Common myeloid progenitor, CD34-positive (primary cell): ENCODE measurements at regions of chr4 and their contacts with region 1.

Region 1: DNA sequence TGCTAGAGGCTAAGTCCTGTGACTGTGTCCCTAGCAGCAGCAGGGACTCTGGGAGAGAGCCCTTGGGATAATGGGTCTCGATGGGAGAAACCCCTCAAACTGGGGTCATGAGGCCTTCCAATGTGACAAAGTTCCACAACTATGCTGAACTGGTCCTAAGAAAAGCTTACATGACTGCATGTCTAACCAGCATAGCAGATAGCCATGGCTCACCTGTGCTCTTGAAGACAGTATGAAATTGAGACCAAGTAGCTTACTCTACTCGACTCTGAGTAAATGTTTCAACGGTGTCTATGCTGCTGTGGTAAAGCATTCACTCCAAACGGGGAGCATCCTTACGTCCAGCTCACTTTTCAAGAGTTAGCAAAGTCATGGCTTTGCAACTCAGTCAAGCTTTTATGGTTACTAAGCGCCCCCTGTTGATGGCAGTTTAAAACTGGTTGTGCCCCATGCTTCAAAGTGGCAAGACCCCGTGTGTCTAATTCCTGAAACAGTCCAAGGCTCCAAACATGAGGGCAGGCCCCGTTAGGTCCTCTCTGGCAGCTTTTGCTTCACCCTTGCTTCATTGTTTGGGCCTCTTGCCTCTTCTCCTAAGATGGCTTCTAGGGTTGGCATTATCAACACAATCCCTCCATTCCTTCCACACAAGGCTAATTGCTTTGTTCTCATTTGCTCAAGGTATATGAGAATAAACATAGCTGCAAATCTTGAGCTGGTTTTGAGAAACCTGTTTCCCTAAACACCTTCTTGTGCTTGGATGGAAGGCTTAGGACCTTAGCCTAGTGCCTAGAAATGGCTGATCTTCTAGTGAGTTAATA is 46.6 kb downstream of the CCNG2 start:
- DNase-seq: peak; percentile 81 to 92 (median 89)
- H3K4me3 ChIP-seq: no peak overlapping the region
- H3K27ac ChIP-seq: no peak overlapping the region
- H3K4me1 ChIP-seq: peaks cover 0 to 2% (median 0%) of the 10 kb centered on the region in 4 experiments
- H3K27me3 ChIP-seq: no peaks in the 10 kb centered on the region

Region 2: GRCh38 chr4:76811604-76812412 is 391.8 kb before region 1 on chr4:
- CTCF ChIA-PET with region 1: no interaction called
- POLR2A ChIA-PET with region 1: no interaction called
- DNase-seq: no peak
- H3K4me3 ChIP-seq: no peak overlapping the region
- H3K27ac ChIP-seq: no peak overlapping the region
- H3K4me1 ChIP-seq: peaks cover 0 to 5% (median 0%) of the 10 kb centered on the region in 4 experiments
- H3K27me3 ChIP-seq: no peaks in the 10 kb centered on the region

Region 3: DNA sequence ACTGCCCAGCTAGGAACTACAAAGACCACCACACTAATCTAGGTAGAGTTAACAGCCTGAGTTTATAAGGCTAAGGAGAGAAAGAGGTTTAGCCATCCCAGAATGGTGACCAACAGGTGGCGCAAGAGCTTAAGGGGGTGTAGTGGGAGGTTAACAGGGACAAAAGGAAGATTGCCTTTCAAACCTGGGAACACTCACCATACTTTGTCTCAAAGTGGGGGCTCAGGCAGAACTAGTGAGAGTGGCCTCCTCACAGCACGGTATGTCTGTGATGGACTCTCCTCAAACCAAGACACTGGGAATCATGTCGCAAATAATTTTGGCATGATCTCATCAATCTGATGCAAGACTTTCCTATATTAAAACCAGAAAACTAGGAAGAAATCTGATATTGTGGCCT is 151.2 kb before region 1 on chr4:
- CTCF ChIA-PET with region 1: interaction called, 364 read pairs
- POLR2A ChIA-PET with region 1: no interaction called
- DNase-seq: peak; percentile 70 to 80 (median 73)
- H3K4me3 ChIP-seq: no peak overlapping the region
- H3K27ac ChIP-seq: no peak overlapping the region
- H3K4me1 ChIP-seq: peaks cover 0 to 3% (median 0%) of the 10 kb centered on the region in 4 experiments
- H3K27me3 ChIP-seq: no peaks in the 10 kb centered on the region

Region 4: DNA sequence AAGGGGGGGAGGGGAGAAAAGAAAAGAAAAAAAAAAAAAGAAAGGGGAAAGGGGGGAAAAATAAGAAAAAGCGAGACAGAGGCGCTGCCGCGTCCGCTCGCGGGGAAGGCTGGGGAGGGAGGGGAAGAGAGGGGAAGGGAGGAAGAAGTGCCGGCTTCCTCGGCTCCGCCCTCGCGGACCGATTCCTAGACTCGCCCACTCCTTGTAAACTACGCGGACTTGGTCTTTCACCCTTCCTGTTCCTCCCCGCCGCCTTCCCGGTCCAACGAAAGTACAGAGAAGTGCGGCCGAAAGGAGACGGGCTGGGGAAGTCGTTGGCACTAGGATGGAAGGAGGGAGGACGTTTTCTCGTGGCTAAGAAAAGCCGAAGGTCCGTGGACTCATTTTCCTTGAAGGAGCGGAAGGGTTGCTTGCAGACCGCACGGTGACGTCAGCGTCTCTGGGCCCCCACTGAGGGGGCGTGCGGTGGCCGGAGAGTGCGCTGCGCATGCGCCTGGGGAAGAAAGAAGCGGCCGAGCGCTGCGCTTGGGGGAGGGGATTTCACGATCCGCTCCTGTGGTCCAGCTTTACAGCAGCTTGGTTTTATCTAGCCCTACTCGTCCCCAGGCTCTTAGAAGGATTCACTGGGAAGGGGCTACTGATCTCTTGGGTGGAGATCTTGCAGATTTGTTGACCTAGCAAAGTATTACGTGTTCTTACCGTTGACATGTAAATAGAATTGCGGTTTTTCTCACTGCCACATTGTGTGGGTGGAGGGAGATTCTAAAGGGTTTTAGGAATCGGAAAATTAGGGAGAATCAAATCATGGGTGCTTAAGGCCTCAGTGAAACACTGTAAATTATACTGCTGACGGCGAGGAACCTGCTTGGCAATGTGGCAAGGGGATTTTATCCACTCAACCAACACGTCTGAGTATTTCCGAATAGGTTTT is 127.5 kb before region 1 on chr4 and contains the start of gene CCNI:
- CTCF ChIA-PET with region 1: interaction called, 12 read pairs
- POLR2A ChIA-PET with region 1: no interaction called
- DNase-seq: peak; percentile 98
- H3K4me3 ChIP-seq: peak within 1 kb of the TSS; percentile 79 to 99 (median 93)
- H3K27ac ChIP-seq: peak within 1 kb of the TSS; percentile 100
- H3K4me1 ChIP-seq: peaks cover 21 to 55% (median 46%) of the 10 kb centered on the region in 4 experiments
- H3K27me3 ChIP-seq: no peaks in the 10 kb centered on the region

Region 5: DNA sequence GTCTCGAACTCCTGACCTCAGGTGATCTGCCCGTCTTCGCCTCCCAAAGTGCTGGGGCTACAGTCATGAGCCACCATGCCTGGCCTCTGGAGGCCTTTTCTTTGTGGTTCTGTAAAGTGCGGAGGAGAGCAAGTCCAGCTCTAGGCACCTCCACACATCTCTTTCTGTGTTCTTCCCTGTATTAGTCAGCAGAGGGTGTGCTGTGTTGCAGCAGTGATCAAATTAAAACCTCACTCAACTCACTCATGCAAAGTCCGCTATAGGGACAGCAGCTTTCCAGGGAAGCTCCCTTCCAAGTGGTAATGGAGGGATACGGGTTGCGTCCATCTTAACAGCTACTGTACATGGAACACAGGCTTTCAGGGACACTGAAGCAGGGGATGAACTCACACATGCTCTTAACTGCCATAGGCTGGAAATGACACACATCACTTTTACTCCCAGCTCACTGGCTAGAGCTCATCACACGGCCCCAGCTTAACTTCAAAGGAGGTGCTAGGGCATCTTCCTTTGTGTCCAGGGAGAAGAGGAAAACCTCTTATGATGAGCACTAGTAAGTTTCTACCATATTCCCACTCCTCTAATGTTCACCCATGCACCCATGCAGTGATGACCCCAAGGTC is 82.6 kb before region 1 on chr4:
- CTCF ChIA-PET with region 1: interaction called, 31 read pairs
- POLR2A ChIA-PET with region 1: no interaction called
- DNase-seq: peak in 2 of 3 donors; percentile 27 to 33
- H3K4me3 ChIP-seq: no peak overlapping the region
- H3K27ac ChIP-seq: no peak overlapping the region
- H3K4me1 ChIP-seq: peaks cover 0 to 4% (median 2%) of the 10 kb centered on the region in 4 experiments
- H3K27me3 ChIP-seq: no peaks in the 10 kb centered on the region

Region 6: GRCh38 chr4:77132652-77133312 is 70.8 kb before region 1 on chr4:
- CTCF ChIA-PET with region 1: interaction called, 31 read pairs
- POLR2A ChIA-PET with region 1: no interaction called
- DNase-seq: peak in 1 of 3 donors; percentile 19
- H3K4me3 ChIP-seq: no peak overlapping the region
- H3K27ac ChIP-seq: no peak overlapping the region
- H3K4me1 ChIP-seq: peaks cover 0 to 13% (median 9%) of the 10 kb centered on the region in 4 experiments
- H3K27me3 ChIP-seq: no peaks in the 10 kb centered on the region

Region 7: GRCh38 chr4:77178560-77178959 is 25.0 kb before region 1 on chr4:
- CTCF ChIA-PET with region 1: interaction called, 23 read pairs
- POLR2A ChIA-PET with region 1: no interaction called
- DNase-seq: no peak
- H3K4me3 ChIP-seq: no peak overlapping the region
- H3K27ac ChIP-seq: no peak overlapping the region
- H3K4me1 ChIP-seq: peaks cover 0 to 3% (median 0%) of the 10 kb centered on the region in 4 experiments
- H3K27me3 ChIP-seq: no peaks in the 10 kb centered on the region